Thyroid gland (tissue), 4 donors: ENCODE measurements at regions of chr11 and their contacts with region 1.

Region 1: GRCh38 chr11:78645226-78646202 is 70.8 kb upstream of the NARS2 start:
- DNase-seq: peak; percentile 78 to 81
- H3K4me3 ChIP-seq: no peak overlapping the region
- H3K27ac ChIP-seq: no peak overlapping the region
- H3K4me1 ChIP-seq: no peaks in the 10 kb centered on the region
- H3K27me3 ChIP-seq: no peaks in the 10 kb centered on the region
- CTCF ChIP-seq: peak; percentile 75 to 97 (median 94)
- POLR2A ChIP-seq: no peak

Region 2: DNA sequence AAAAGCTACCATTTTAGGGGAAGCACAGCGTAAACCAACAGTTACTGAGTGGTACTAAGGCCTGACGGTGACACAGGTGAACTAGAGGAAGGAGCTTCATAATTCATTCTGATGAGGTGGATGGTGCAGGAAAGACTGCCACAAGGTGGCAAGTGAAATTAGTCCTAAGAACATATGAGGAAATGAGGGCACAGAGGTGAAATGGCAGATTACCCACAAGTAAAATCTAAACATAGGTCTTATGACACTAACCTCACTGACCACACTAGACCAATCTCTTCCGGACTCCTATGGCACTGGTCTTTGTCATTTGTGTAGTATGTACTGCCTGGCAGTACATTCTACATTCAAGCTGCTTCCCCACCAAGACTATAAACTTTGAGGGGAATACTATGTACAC is 248.1 kb before region 1 on chr11:
- intact Hi-C with region 1: no loop called
- DNase-seq: no peak
- H3K4me3 ChIP-seq: no peak overlapping the region
- H3K27ac ChIP-seq: no peak overlapping the region
- H3K4me1 ChIP-seq: no peaks in the 10 kb centered on the region
- H3K27me3 ChIP-seq: no peaks in the 10 kb centered on the region
- CTCF ChIP-seq: no peak
- POLR2A ChIP-seq: no peak

Region 3: GRCh38 chr11:79076526-79077115 is 431.1 kb after region 1 on chr11:
- intact Hi-C with region 1: loop called (anchors 5 kb)
- DNase-seq: peak; percentile 50 to 65
- H3K4me3 ChIP-seq: no peak overlapping the region
- H3K27ac ChIP-seq: no peak overlapping the region
- H3K4me1 ChIP-seq: no peaks in the 10 kb centered on the region
- H3K27me3 ChIP-seq: no peaks in the 10 kb centered on the region
- CTCF ChIP-seq: peak; percentile 20 to 61 (median 47)
- POLR2A ChIP-seq: no peak